AG04449 (cell line): ENCODE measurements at regions of chr15 and their contacts with region 1.

Region 1: DNA sequence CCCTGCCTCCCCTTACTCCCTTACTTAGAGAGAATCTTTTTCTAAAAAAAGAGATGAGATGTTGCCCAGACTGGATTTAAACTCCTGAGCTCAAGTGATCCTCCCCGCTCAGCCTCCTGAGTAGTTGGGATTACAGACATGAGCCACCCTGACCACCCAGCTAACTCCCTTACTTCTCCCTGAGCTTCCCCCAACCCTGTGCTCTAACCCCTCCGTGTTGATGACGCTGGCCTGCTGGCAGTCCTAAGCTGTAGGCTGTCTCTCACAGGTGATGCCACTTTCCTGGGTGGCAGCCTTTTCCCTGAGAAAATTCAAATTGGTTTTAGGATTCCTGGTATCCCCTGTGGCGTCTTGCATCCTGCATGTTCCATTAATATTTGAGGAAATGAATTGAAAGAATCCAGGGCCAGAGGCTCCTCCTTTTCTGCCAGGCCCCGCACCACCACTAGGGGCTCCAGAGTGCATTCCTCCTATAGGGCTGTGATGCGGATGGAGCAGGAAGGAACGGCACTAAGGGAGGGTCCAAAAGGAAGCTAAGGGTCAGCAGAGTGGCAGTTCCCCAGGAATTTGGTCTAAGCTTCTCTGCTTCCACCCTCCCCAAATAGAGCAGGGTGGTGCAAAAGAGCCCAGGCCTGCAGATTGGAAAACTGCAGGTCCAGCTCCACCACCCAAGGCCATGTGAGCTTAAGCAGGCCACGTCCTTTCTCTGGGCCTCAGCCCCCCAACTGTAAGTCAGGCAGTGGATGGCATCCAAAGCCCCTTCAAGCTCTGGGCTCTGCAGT is 101.1 kb downstream of the DAPK2 start:
- DNase-seq: no peak
- H3K4me3 ChIP-seq: no peak overlapping the region
- CTCF ChIP-seq: peak; percentile 82

Region 2: DNA sequence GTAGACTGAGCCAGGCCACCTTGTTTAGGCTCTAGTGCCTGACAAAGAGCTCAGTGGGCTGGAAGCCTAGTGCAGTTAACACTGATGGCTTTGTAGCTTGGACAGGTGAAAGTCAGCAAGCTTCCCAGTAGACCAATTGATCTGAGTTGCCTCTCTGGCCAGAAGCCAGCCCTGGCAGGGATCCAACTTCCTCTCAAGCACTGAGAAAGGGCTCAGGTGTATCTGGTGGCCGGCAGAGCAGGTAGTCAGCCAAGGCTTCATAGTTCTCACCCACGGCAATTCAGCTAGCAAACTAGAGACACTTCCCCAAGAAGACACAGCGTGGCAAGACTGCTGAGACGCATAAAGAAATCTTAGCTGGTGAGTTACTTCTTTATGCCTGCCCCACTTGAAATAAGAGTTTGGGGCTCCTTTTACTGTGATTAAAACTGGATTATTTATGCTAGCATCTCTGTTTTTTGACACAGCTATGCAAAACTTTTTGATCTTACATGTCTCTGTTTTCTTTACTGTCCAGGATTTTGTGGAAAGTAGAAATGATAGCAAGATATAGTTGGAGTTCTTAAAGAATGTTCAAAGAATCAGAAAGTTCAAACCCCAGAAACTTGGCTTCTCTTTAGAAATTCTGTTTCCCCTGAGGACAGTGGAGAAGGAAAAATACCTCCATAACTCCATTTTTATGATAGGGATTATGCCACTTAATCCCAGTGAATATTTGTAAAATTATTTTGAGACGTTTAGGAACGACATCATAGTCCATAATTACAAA is 555.1 kb before region 1 on chr15:
- CTCF ChIA-PET with region 1: no interaction called
- POLR2A ChIA-PET with region 1: no interaction called
- DNase-seq: no peak
- H3K4me3 ChIP-seq: no peak overlapping the region
- CTCF ChIP-seq: no peak

Region 3: GRCh38 chr15:63923993-63924950 is 20.9 kb before region 1 on chr15:
- CTCF ChIA-PET with region 1: interaction called, 76 read pairs
- POLR2A ChIA-PET with region 1: no interaction called
- DNase-seq: no peak
- H3K4me3 ChIP-seq: no peak overlapping the region
- CTCF ChIP-seq: no peak

Region 4: GRCh38 chr15:63970621-63971426 is 25.6 kb after region 1 on chr15:
- CTCF ChIA-PET with region 1: interaction called, 16 read pairs
- POLR2A ChIA-PET with region 1: no interaction called
- DNase-seq: no peak
- H3K4me3 ChIP-seq: no peak overlapping the region
- CTCF ChIP-seq: no peak

Region 5: DNA sequence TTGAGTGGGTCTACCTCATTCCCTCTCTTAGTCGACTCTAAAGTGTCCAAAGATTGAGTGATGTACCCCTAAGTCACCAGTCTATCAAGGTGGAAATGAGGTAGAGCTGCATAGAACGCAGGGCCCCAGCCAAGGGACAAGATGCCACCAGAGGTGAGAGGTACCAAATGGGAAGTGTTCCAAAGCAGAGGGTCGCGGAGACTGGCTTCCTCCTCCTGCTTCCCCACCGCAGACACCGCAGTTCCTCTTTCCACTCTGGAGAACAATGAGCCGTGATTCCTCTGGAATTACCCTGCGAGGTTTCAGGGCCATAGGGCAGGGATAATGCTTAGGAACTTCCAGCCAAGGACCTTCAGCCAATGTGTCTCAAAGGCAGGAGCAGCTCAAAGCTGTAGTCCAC is 45.3 kb after region 1 on chr15:
- CTCF ChIA-PET with region 1: interaction called, 18 read pairs
- POLR2A ChIA-PET with region 1: no interaction called
- DNase-seq: no peak
- H3K4me3 ChIP-seq: no peak overlapping the region
- CTCF ChIP-seq: no peak

Region 6: DNA sequence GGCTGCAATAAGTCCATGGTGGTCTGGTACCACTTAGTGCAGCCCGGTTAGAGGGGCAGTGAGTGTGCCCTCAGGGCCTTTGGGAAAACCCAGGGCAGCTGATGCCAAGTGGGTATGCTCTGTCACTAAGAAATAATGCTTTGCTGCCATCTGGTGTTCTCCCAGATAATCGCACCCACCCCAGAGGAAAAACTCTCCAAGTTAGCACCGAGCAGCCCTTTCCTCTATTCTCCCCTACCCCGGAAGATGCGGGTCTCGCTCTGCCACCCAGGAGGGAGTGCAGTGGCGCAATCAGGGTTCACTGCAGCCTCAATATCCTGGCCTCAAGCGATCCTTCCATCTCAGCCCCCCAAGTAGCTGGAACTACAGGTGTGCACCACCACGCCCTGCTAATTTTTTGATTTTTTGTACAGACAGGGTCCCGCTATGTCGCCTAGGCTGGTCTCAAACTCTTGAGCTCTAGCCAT is 122.4 kb after region 1 on chr15:
- CTCF ChIA-PET with region 1: interaction called, 14 read pairs
- POLR2A ChIA-PET with region 1: no interaction called
- DNase-seq: no peak
- H3K4me3 ChIP-seq: no peak overlapping the region
- CTCF ChIP-seq: peak; percentile 66